ENCODE measurements at regions of chr17 and their contacts with region 1.

Region 1: GRCh38 chr17:82863941-82864774 is 24.3 kb upstream of the ZNF750 start:
- DNase-seq: peak; percentile 89 to 97 (median 90)
- H3K4me3 ChIP-seq: peak overlapping the region in 1 of 2 donors; percentile 34
- H3K4me3 Mint-ChIP-seq: peak overlapping the region; percentile 70 to 84 (median 81)
- H3K27ac ChIP-seq: peak overlapping the region; percentile 74
- H3K27ac Mint-ChIP-seq: peak overlapping the region; percentile 89 to 98 (median 96)
- H3K4me1 ChIP-seq: peaks cover 88% of the 10 kb centered on the region
- H3K4me1 Mint-ChIP-seq: peaks cover 42 to 92% (median 57%) of the 10 kb centered on the region in 4 donors
- H3K27me3 ChIP-seq: no peaks in the 10 kb centered on the region
- H3K27me3 Mint-ChIP-seq: no peaks in the 10 kb centered on the region

Region 2: GRCh38 chr17:82502207-82502606 is 362.0 kb before region 1 on chr17:
- CTCF ChIA-PET with region 1: no interaction called
- POLR2A ChIA-PET with region 1: no interaction called
- intact Hi-C with region 1: no loop called
- DNase-seq: no peak
- H3K4me3 ChIP-seq: no peak overlapping the region
- H3K4me3 Mint-ChIP-seq: no peak overlapping the region
- H3K27ac ChIP-seq: no peak overlapping the region
- H3K27ac Mint-ChIP-seq: no peak overlapping the region
- H3K4me1 ChIP-seq: peaks cover 5% of the 10 kb centered on the region
- H3K4me1 Mint-ChIP-seq: peaks cover 9 to 10% (median 10%) of the 10 kb centered on the region in 4 donors
- H3K27me3 ChIP-seq: no peaks in the 10 kb centered on the region
- H3K27me3 Mint-ChIP-seq: no peaks in the 10 kb centered on the region

Region 3: GRCh38 chr17:82726427-82726826 is 137.7 kb before region 1 on chr17:
- CTCF ChIA-PET with region 1: no interaction called
- POLR2A ChIA-PET with region 1: no interaction called
- intact Hi-C with region 1: no loop called
- DNase-seq: no peak
- H3K4me3 ChIP-seq: no peak overlapping the region
- H3K4me3 Mint-ChIP-seq: no peak overlapping the region
- H3K27ac ChIP-seq: no peak overlapping the region
- H3K27ac Mint-ChIP-seq: no peak overlapping the region
- H3K4me1 ChIP-seq: no peaks in the 10 kb centered on the region
- H3K4me1 Mint-ChIP-seq: peaks cover 0 to 2% (median under 1%) of the 10 kb centered on the region in 4 donors
- H3K27me3 ChIP-seq: no peaks in the 10 kb centered on the region
- H3K27me3 Mint-ChIP-seq: no peaks in the 10 kb centered on the region

Region 4: DNA sequence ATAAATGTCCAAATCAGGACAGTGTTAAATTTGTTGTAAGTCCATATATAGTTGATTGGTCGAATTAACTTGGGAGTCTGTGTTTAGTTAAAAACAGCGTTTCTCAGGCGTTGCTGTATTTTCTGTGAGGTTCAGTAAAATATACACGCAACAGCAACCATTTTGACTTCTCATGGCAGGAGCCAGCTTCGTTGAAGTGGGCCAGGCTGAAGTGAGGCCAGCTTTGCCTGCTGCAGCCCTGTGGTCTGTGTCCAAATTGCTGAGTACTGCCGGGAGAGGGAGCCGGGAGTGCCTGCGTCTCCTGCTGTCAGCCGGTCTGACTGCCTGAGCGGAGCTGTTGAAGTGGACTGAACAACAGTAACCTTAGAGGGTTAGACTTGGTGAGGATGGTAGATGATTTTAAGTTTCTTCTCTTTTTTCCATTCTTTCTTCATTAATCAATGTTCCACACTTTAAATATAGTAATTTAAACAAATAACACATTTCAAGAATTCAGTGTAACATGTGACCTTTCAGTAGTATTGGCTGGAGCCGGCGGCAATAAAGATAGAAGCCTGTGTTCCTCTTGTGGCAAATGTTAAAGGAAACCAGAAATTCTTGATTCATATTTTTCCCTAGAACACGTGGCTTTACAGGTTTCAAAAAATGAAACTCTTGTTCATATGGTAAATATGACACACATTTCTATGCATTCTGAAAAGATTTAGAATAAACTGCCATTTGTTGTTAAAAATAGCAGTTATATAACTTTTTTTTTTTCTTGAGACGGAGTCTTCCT is 12.6 kb after region 1 on chr17:
- CTCF ChIA-PET with region 1: interaction called, 4 read pairs
- POLR2A ChIA-PET with region 1: interaction called, 83 read pairs
- intact Hi-C with region 1: no loop called
- DNase-seq: no peak
- H3K4me3 ChIP-seq: no peak overlapping the region
- H3K4me3 Mint-ChIP-seq: no peak overlapping the region
- H3K27ac ChIP-seq: no peak overlapping the region
- H3K27ac Mint-ChIP-seq: peak overlapping the region in 1 of 7 donors; percentile 52
- H3K4me1 ChIP-seq: peaks cover 17% of the 10 kb centered on the region
- H3K4me1 Mint-ChIP-seq: peaks cover 17 to 54% (median 28%) of the 10 kb centered on the region in 4 donors
- H3K27me3 ChIP-seq: no peaks in the 10 kb centered on the region
- H3K27me3 Mint-ChIP-seq: no peaks in the 10 kb centered on the region

Region 5: GRCh38 chr17:82882715-82883418 is 18.7 kb after region 1 on chr17:
- CTCF ChIA-PET with region 1: interaction called, 11 read pairs
- POLR2A ChIA-PET with region 1: interaction called, 83 read pairs
- intact Hi-C with region 1: loop called (anchors 2 kb)
- DNase-seq: peak; percentile 82 to 93 (median 84)
- H3K4me3 ChIP-seq: peak overlapping the region in 1 of 2 donors; percentile 51
- H3K4me3 Mint-ChIP-seq: peak overlapping the region; percentile 80 to 95 (median 92)
- H3K27ac ChIP-seq: peak overlapping the region; percentile 67
- H3K27ac Mint-ChIP-seq: peak overlapping the region; percentile 98 to 100 (median 99)
- H3K4me1 ChIP-seq: peaks cover 56% of the 10 kb centered on the region
- H3K4me1 Mint-ChIP-seq: peaks cover 57 to 94% (median 78%) of the 10 kb centered on the region in 4 donors
- H3K27me3 ChIP-seq: no peaks in the 10 kb centered on the region
- H3K27me3 Mint-ChIP-seq: no peaks in the 10 kb centered on the region

Region 6: GRCh38 chr17:82892899-82893565 is 28.9 kb after region 1 on chr17:
- CTCF ChIA-PET with region 1: no interaction called
- POLR2A ChIA-PET with region 1: interaction called, 47 read pairs
- intact Hi-C with region 1: loop called (anchors 1 kb)
- DNase-seq: peak; percentile 74 to 91 (median 78)
- H3K4me3 ChIP-seq: no peak overlapping the region
- H3K4me3 Mint-ChIP-seq: peak overlapping the region in 7 of 8 donors; percentile 7 to 82 (median 72)
- H3K27ac ChIP-seq: peak overlapping the region; percentile 17
- H3K27ac Mint-ChIP-seq: peak overlapping the region; percentile 88 to 99 (median 95)
- H3K4me1 ChIP-seq: peaks cover 25% of the 10 kb centered on the region
- H3K4me1 Mint-ChIP-seq: peaks cover 13 to 45% (median 29%) of the 10 kb centered on the region in 4 donors
- H3K27me3 ChIP-seq: no peaks in the 10 kb centered on the region
- H3K27me3 Mint-ChIP-seq: no peaks in the 10 kb centered on the region

Region 7: GRCh38 chr17:82924798-82925197 is 60.6 kb after region 1 on chr17:
- CTCF ChIA-PET with region 1: no interaction called
- POLR2A ChIA-PET with region 1: no interaction called
- intact Hi-C with region 1: no loop called
- DNase-seq: no peak
- H3K4me3 ChIP-seq: no peak overlapping the region
- H3K4me3 Mint-ChIP-seq: no peak overlapping the region
- H3K27ac ChIP-seq: no peak overlapping the region
- H3K27ac Mint-ChIP-seq: peak overlapping the region in 1 of 7 donors; percentile 3
- H3K4me1 ChIP-seq: no peaks in the 10 kb centered on the region
- H3K4me1 Mint-ChIP-seq: no peaks in the 10 kb centered on the region
- H3K27me3 ChIP-seq: no peaks in the 10 kb centered on the region
- H3K27me3 Mint-ChIP-seq: no peaks in the 10 kb centered on the region

Region 8: GRCh38 chr17:83002118-83002805 is 138.1 kb after region 1 on chr17:
- CTCF ChIA-PET with region 1: no interaction called
- POLR2A ChIA-PET with region 1: no interaction called
- intact Hi-C with region 1: no loop called
- DNase-seq: no peak
- H3K4me3 ChIP-seq: no peak overlapping the region
- H3K4me3 Mint-ChIP-seq: no peak overlapping the region
- H3K27ac ChIP-seq: no peak overlapping the region
- H3K27ac Mint-ChIP-seq: no peak overlapping the region
- H3K4me1 ChIP-seq: no peaks in the 10 kb centered on the region
- H3K4me1 Mint-ChIP-seq: peaks cover 0 to 1% (median 0%) of the 10 kb centered on the region in 4 donors
- H3K27me3 ChIP-seq: no peaks in the 10 kb centered on the region
- H3K27me3 Mint-ChIP-seq: no peaks in the 10 kb centered on the region

Region 9: DNA sequence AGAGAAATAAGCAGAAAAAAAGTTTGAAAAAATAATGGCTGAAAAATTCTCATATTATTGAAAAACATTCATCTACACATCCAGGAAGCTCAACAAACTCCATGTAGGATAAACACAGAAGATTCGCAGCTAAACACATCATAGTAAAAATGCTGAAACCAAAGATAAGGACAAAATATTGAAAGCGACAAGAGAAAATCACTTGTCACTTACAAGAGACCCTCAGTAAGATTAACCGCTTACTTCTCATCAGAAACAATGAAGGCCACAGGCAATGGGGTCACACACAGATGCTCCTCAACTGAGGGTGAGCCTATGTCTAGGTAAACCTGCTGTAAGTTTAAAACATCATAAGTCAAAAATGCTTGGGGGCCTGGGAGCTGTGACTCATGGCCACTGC is 177.1 kb after region 1 on chr17:
- CTCF ChIA-PET with region 1: no interaction called
- POLR2A ChIA-PET with region 1: no interaction called
- intact Hi-C with region 1: loop called (anchors 10 kb)
- DNase-seq: no peak
- H3K4me3 ChIP-seq: no peak overlapping the region
- H3K4me3 Mint-ChIP-seq: no peak overlapping the region
- H3K27ac ChIP-seq: no peak overlapping the region
- H3K27ac Mint-ChIP-seq: peak overlapping the region in 1 of 7 donors; percentile 64
- H3K4me1 ChIP-seq: no peaks in the 10 kb centered on the region
- H3K4me1 Mint-ChIP-seq: peaks cover 10 to 24% (median 15%) of the 10 kb centered on the region in 4 donors
- H3K27me3 ChIP-seq: no peaks in the 10 kb centered on the region
- H3K27me3 Mint-ChIP-seq: no peaks in the 10 kb centered on the region